Tibial artery (tissue), 4 donors: ENCODE measurements at regions of chr18 and their contacts with region 1.

Region 1: GRCh38 chr18:39561126-39561525 is 1995.5 kb upstream of the CELF4 start:
- DNase-seq: no peak
- H3K4me3 ChIP-seq: no peak overlapping the region
- H3K27ac ChIP-seq: no peak overlapping the region
- H3K4me1 ChIP-seq: no peaks in the 10 kb centered on the region
- H3K27me3 ChIP-seq: no peaks in the 10 kb centered on the region
- CTCF ChIP-seq: no peak

Region 2: DNA sequence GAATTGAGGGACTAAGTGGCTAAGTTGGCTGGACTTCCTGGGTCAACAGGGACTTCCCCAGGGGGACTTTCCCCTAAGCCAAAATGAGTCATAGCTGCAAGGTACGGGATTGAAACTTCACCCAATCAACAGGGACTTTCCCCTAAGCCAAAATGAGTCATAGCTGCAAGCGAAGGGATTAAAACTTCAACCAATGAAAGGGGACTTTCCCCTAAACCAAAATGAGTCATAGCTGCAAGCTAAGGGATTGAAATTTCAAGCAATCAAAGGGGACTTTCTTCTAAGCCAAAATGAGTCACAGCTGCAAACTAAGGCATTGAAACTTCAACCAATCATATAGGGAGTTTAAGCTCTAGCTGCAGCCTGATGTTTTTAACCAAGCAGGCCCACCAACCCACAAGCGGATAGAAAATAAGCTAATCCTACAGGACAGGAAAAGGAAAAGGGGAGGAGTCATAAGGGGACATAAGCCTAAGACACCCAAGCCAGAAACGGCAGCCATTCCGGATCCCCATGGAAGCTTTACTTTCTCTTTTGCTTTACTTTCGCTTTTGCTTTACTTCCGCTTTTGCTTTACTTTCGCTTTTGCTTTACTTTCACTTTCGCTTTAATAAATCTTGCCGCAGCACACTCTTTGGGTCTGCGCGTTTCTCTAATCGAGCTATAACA is 620.1 kb before region 1 on chr18:
- intact Hi-C with region 1: loop called (anchors 5 kb)
- DNase-seq: no peak
- H3K4me3 ChIP-seq: no peak overlapping the region
- H3K27ac ChIP-seq: no peak overlapping the region
- H3K4me1 ChIP-seq: no peaks in the 10 kb centered on the region
- H3K27me3 ChIP-seq: no peaks in the 10 kb centered on the region
- CTCF ChIP-seq: no peak